ENCODE measurements at regions of chr7 and their contacts with region 1.

Region 1: DNA sequence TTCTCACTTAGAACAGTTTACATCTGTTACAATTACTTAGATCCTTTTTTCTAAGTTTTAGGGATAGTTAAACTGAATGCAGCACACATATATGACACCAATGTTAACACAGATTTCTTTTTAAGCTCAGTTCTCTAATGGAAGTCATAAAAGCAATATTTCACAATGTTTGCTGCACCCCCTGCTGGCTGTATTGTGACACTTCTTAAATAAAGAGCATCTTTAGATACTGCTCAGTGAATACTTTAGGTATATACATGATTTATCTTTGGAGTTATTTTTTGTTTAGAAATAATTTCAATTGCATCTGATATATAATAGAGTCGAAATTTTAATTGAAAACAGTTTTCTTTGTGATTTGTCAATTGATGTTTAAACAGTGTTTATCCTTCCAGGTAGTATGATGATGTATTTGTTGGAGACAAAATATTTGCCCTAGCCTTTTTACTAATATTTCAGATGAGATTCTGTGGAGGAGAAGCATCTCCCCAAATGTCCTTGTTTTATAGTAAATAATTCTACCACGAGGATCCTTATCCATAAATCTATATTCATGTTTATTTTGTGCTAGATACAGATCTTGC is 174.4 kb downstream of the ST7 start:
- DNase-seq: no peak
- CTCF ChIP-seq: peak; percentile 60

Region 2: DNA sequence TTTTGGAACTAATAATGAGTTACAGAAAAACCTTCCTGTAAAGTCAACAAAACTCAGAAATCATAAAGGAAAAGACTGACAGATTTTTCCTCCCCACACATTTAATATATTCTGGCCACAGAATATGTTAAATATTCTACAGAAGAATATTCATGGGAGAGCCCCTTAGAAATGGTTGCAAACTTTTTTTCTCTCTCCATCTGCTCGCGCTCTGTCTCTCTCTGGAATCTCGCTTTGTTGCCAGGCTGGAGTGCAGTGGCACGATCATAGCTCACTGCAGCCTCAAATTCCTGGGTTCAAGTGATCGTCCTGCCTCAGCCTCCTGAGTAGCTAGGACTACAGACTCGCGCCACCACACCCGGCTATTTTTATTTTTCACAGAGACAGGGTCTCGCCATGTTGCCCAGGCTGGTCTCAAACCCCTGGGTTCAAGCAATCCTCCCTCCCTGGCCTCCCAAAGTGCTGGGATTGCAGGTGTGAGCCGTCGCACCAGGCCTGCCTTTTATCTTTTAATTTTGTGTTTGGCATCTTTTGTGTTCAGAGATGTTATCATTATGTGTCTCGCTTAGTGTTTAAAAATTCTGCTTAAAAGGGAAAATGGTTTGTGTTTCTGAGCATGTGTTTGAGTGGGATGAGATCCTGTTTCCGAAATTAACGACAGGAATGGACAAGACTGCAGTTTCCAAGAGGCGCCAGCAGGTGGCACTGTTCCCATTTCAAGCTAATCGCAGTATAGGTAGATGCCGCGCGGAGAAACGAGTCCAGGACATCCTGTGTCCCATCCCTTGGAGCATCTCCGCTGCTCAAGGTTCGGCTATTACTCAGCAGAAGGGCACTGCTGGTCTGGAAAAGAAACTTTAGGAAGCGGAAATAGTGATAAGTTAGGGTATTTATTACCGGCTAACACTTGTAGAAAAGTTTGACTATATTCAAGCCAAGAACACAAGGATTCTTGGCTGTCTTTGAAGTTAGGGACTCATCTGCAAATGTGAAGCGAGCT is 197.5 kb before region 1 on chr7:
- in situ Hi-C with region 1: loop called (anchors 5 kb)
- DNase-seq: peak; percentile 76
- CTCF ChIP-seq: peak; percentile 87

Region 3: DNA sequence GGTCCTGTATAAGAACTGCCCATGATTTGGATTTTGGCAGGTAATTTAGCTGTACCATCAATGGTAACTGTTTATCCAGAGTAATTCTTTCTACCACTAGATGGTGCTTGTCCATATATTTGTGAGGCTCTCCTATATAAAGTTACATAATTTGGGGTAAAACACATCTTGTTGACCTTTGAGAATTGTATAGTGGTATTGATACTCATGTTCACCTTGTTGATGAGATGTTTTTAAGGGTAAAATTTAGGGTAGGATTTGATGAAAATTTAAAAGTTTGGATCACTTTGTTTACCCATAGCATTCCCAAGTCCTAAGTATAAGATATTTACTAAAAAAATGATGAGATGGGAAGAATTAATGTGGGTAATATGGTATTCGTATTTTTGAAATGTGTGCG is 142.8 kb before region 1 on chr7:
- in situ Hi-C with region 1: loop called (anchors 5 kb)
- DNase-seq: peak; percentile 32
- CTCF ChIP-seq: peak; percentile 45